IMR-90 (cell line): ENCODE measurements at regions of chr2 and their contacts with region 1.

Region 1: GRCh38 chr2:189037518-189037917 is 63.3 kb downstream of the COL3A1 start:
- DNase-seq: peak; percentile 59
- ATAC-seq: peak; percentile 61
- H3K4me3 ChIP-seq: no peak overlapping the region
- H3K27ac ChIP-seq: no peak overlapping the region
- H3K4me1 ChIP-seq: no peaks in the 10 kb centered on the region
- H3K27me3 ChIP-seq: no peaks in the 10 kb centered on the region
- CTCF ChIP-seq: no peak
- POLR2A ChIP-seq: no peak
- RAD21 ChIP-seq: no peak

Region 2: GRCh38 chr2:189002079-189002478 is 35.4 kb before region 1 on chr2:
- CTCF ChIA-PET with region 1: no interaction called
- POLR2A ChIA-PET with region 1: no interaction called
- dilution Hi-C with region 1: no loop called
- in situ Hi-C with region 1: no loop called
- intact Hi-C with region 1: loop called (anchors 5 kb)
- DNase-seq: peak; percentile 85
- ATAC-seq: peak; percentile 25
- H3K4me3 ChIP-seq: no peak overlapping the region
- H3K27ac ChIP-seq: peak overlapping the region; percentile 26; the same call in 1 of the 2 replicates
- H3K4me1 ChIP-seq: peaks cover 10% of the 10 kb centered on the region
- H3K27me3 ChIP-seq: no peaks in the 10 kb centered on the region
- CTCF ChIP-seq: no peak
- POLR2A ChIP-seq: no peak
- RAD21 ChIP-seq: no peak

Region 3: GRCh38 chr2:189060096-189060652 is 22.7 kb after region 1 on chr2:
- CTCF ChIA-PET with region 1: no interaction called
- POLR2A ChIA-PET with region 1: no interaction called
- dilution Hi-C with region 1: no loop called
- in situ Hi-C with region 1: no loop called
- intact Hi-C with region 1: loop called (anchors 2 kb)
- DNase-seq: peak; percentile 74
- ATAC-seq: peak; percentile 83
- H3K4me3 ChIP-seq: no peak overlapping the region
- H3K27ac ChIP-seq: peak overlapping the region; percentile 73; the same call in 1 of the 2 replicates
- H3K4me1 ChIP-seq: peaks cover 2% of the 10 kb centered on the region; the same call in 1 of the 2 replicates
- H3K27me3 ChIP-seq: no peaks in the 10 kb centered on the region
- CTCF ChIP-seq: no peak
- POLR2A ChIP-seq: no peak
- RAD21 ChIP-seq: no peak

Region 4: GRCh38 chr2:189287982-189288521 is 250.5 kb after region 1 on chr2:
- CTCF ChIA-PET with region 1: no interaction called
- POLR2A ChIA-PET with region 1: no interaction called
- dilution Hi-C with region 1: no loop called
- in situ Hi-C with region 1: no loop called
- intact Hi-C with region 1: no loop called
- DNase-seq: peak; percentile 91
- ATAC-seq: peak; percentile 75
- H3K4me3 ChIP-seq: no peak overlapping the region
- H3K27ac ChIP-seq: peak overlapping the region; percentile 69; the same call in 1 of the 2 replicates
- H3K4me1 ChIP-seq: peaks cover 16% of the 10 kb centered on the region
- H3K27me3 ChIP-seq: no peaks in the 10 kb centered on the region
- CTCF ChIP-seq: peak; percentile 69
- POLR2A ChIP-seq: no peak
- RAD21 ChIP-seq: peak; percentile 81